ENCODE measurements at regions of chr11 and their contacts with region 1.

Region 1: GRCh38 chr11:65652511-65653231 is 10.0 kb downstream of the RELA start:
- DNase-seq: peak; percentile 92 to 99 (median 96)
- ATAC-seq: peak; percentile 75
- H3K4me3 ChIP-seq: peak overlapping the region; percentile 66
- H3K4me3 Mint-ChIP-seq: peak overlapping the region; percentile 88
- H3K27ac ChIP-seq: peak overlapping the region; percentile 95 to 99
- H3K27ac Mint-ChIP-seq: peak overlapping the region; percentile 97
- H3K4me1 ChIP-seq: peaks cover 60% of the 10 kb centered on the region
- H3K4me1 Mint-ChIP-seq: peaks cover 54% of the 10 kb centered on the region
- H3K27me3 ChIP-seq: no peaks in the 10 kb centered on the region
- H3K27me3 Mint-ChIP-seq: no peaks in the 10 kb centered on the region
- CTCF ChIP-seq: no peak

Region 2: GRCh38 chr11:65637794-65638317 is 14.8 kb before region 1 on chr11 and contains the start of gene SIPA1:
- CTCF ChIA-PET with region 1: interaction called, 10 read pairs
- POLR2A ChIA-PET with region 1: interaction called, 244 read pairs
- intact Hi-C with region 1: loop called (anchors 1 kb)
- DNase-seq: peak; percentile 50 to 90 (median 68)
- ATAC-seq: peak; percentile 43
- H3K4me3 ChIP-seq: peak within 1 kb of the TSS; percentile 100
- H3K4me3 Mint-ChIP-seq: peak within 1 kb of the TSS; percentile 97
- H3K27ac ChIP-seq: peak within 1 kb of the TSS; percentile 92 to 95
- H3K27ac Mint-ChIP-seq: peak within 1 kb of the TSS; percentile 100
- H3K4me1 ChIP-seq: peaks cover 74% of the 10 kb centered on the region
- H3K4me1 Mint-ChIP-seq: peaks cover 60% of the 10 kb centered on the region
- H3K27me3 ChIP-seq: no peaks in the 10 kb centered on the region
- H3K27me3 Mint-ChIP-seq: no peaks in the 10 kb centered on the region
- CTCF ChIP-seq: no peak
- total RNA-seq, gene SIPA1: 272 to 298 TPM

Region 3: GRCh38 chr11:65662799-65663638 is 10.3 kb after region 1 on chr11 and contains the start of gene RELA:
- CTCF ChIA-PET with region 1: interaction called, 5 read pairs
- POLR2A ChIA-PET with region 1: interaction called, 93 read pairs
- intact Hi-C with region 1: loop called in 1 of 2 experiments (anchors 1 kb)
- DNase-seq: peak; percentile 79 to 96 (median 89)
- ATAC-seq: peak; percentile 83
- H3K4me3 ChIP-seq: peak within 1 kb of the TSS; percentile 97
- H3K4me3 Mint-ChIP-seq: peak within 1 kb of the TSS; percentile 92
- H3K27ac ChIP-seq: peak within 1 kb of the TSS; percentile 96 to 97
- H3K27ac Mint-ChIP-seq: peak within 1 kb of the TSS; percentile 94
- H3K4me1 ChIP-seq: peaks cover 59% of the 10 kb centered on the region
- H3K4me1 Mint-ChIP-seq: peaks cover 33% of the 10 kb centered on the region
- H3K27me3 ChIP-seq: no peaks in the 10 kb centered on the region
- H3K27me3 Mint-ChIP-seq: no peaks in the 10 kb centered on the region
- CTCF ChIP-seq: no peak
- total RNA-seq, gene RELA: 379 to 382 TPM

Region 4: DNA sequence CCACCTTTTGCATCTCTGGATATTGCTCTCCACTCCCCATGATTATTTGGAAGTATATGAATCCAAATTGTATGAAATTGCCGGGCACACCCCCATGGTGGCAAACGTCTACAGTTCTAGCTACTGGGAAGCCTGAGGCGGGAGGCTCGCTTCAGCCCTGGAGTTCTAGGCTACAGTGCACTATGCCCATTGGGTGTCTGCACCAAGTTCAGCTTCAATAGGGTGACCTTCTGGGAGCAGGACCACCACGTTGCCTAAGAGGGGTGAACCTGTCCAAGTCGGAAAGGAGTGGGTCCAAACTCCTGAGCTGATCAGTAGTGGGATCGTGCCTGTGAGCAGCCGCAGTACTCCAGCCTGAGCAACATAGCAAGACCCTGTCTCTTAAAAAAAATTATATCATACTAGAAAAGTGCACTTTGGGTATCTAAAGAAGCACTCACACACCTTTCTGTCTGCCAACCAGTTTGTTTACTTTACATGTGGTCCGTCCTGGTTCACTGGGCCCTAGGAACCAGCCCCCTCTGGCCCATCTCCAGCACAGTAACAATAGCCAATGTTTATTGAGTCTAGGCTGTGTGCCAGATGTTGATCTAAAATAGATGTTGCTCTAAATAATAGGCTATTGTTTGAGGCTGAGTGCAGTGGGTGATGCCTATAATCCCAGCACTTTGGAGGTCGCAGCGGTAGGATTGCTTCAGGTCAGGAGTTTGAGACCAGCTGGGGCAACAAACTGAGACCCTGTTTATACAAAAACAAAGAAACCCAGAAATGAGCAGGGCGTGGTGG is 43.0 kb after region 1 on chr11:
- CTCF ChIA-PET with region 1: no interaction called
- POLR2A ChIA-PET with region 1: no interaction called
- intact Hi-C with region 1: no loop called
- DNase-seq: no peak
- ATAC-seq: no peak
- H3K4me3 ChIP-seq: no peak overlapping the region
- H3K4me3 Mint-ChIP-seq: no peak overlapping the region
- H3K27ac ChIP-seq: no peak overlapping the region
- H3K27ac Mint-ChIP-seq: no peak overlapping the region
- H3K4me1 ChIP-seq: no peaks in the 10 kb centered on the region
- H3K4me1 Mint-ChIP-seq: no peaks in the 10 kb centered on the region
- H3K27me3 ChIP-seq: no peaks in the 10 kb centered on the region
- H3K27me3 Mint-ChIP-seq: no peaks in the 10 kb centered on the region
- CTCF ChIP-seq: no peak

Region 5: GRCh38 chr11:65720237-65720934 is 67.7 kb after region 1 on chr11 and contains the start of gene RNASEH2C:
- CTCF ChIA-PET with region 1: no interaction called
- POLR2A ChIA-PET with region 1: interaction called, 15 read pairs
- intact Hi-C with region 1: no loop called
- DNase-seq: peak; percentile 52 to 89 (median 68)
- ATAC-seq: peak; percentile 94
- H3K4me3 ChIP-seq: peak within 1 kb of the TSS; percentile 85
- H3K4me3 Mint-ChIP-seq: peak within 1 kb of the TSS; percentile 94
- H3K27ac ChIP-seq: peak within 1 kb of the TSS; percentile 69 to 79
- H3K27ac Mint-ChIP-seq: peak within 1 kb of the TSS; percentile 82
- H3K4me1 ChIP-seq: peaks cover 27% of the 10 kb centered on the region
- H3K4me1 Mint-ChIP-seq: peaks cover 27% of the 10 kb centered on the region
- H3K27me3 ChIP-seq: no peaks in the 10 kb centered on the region
- H3K27me3 Mint-ChIP-seq: no peaks in the 10 kb centered on the region
- CTCF ChIP-seq: no peak
- total RNA-seq, gene RNASEH2C: 25.3 to 25.9 TPM

Region 6: DNA sequence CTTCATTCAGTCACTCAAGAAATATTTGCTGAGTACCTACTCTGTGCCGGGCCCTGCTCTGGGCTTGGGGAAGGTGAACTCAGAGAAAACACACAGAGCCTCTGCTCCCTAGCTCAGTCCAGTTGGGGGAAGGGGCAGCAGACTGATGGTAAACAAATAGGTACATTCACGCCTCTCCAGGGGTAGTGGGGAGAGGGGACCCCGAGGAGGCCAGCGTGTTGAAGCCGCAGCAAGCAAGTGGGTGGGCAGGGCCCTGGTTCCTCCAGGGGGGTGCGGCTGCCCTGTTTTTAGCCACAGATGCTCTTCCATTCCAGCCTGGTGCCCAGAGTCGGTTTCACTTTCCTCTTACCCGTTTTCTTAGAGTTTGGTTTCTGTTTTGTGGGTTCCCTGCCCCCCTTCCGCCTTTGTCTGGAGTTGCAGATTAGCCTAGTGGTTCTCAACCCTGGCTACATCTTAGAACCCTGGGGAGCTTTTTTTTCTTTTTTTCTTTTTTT is 275.3 kb after region 1 on chr11:
- CTCF ChIA-PET with region 1: no interaction called
- POLR2A ChIA-PET with region 1: no interaction called
- intact Hi-C with region 1: no loop called
- DNase-seq: peak; percentile 59 to 93 (median 76)
- ATAC-seq: peak; percentile 96
- H3K4me3 ChIP-seq: peak overlapping the region; percentile 39
- H3K4me3 Mint-ChIP-seq: peak overlapping the region; percentile 77
- H3K27ac ChIP-seq: peak overlapping the region; percentile 78 to 81
- H3K27ac Mint-ChIP-seq: peak overlapping the region; percentile 95
- H3K4me1 ChIP-seq: peaks cover 26% of the 10 kb centered on the region
- H3K4me1 Mint-ChIP-seq: peaks cover 30% of the 10 kb centered on the region
- H3K27me3 ChIP-seq: no peaks in the 10 kb centered on the region
- H3K27me3 Mint-ChIP-seq: no peaks in the 10 kb centered on the region
- CTCF ChIP-seq: no peak

Measured in CD4-positive, alpha-beta T cell (primary cell).